OCI-LY7 (cell line): ENCODE measurements at regions of chr15 and their contacts with region 1.

Region 1: GRCh38 chr15:90219421-90220166 is 14.1 kb downstream of the CIB1 start:
- DNase-seq: peak; percentile 69
- H3K4me3 ChIP-seq: no peak overlapping the region
- H3K27ac ChIP-seq: no peak overlapping the region
- H3K4me1 ChIP-seq: peaks cover 5% of the 10 kb centered on the region
- CTCF ChIP-seq: peak; percentile 88

Region 2: GRCh38 chr15:89673165-89673512 is 546.5 kb before region 1 on chr15:
- CTCF ChIA-PET with region 1: no interaction called
- POLR2A ChIA-PET with region 1: no interaction called
- intact Hi-C with region 1: no loop called
- DNase-seq: peak; percentile 48
- H3K4me3 ChIP-seq: no peak overlapping the region
- H3K27ac ChIP-seq: no peak overlapping the region
- H3K4me1 ChIP-seq: no peaks in the 10 kb centered on the region
- CTCF ChIP-seq: peak; percentile 75

Region 3: GRCh38 chr15:90143166-90143655 is 76.4 kb before region 1 on chr15:
- CTCF ChIA-PET with region 1: no interaction called
- POLR2A ChIA-PET with region 1: interaction called, 5 read pairs
- intact Hi-C with region 1: loop called (anchors 1 kb)
- DNase-seq: peak; percentile 79
- H3K4me3 ChIP-seq: no peak overlapping the region
- H3K27ac ChIP-seq: no peak overlapping the region
- H3K4me1 ChIP-seq: peaks cover 6% of the 10 kb centered on the region
- CTCF ChIP-seq: peak; percentile 97

Region 4: GRCh38 chr15:90161950-90162361 is 57.6 kb before region 1 on chr15:
- CTCF ChIA-PET with region 1: interaction called, 4 read pairs
- POLR2A ChIA-PET with region 1: interaction called, 3 read pairs
- intact Hi-C with region 1: loop called (anchors 1 kb)
- DNase-seq: peak; percentile 21
- H3K4me3 ChIP-seq: no peak overlapping the region
- H3K27ac ChIP-seq: no peak overlapping the region
- H3K4me1 ChIP-seq: no peaks in the 10 kb centered on the region
- CTCF ChIP-seq: no peak